Tibial artery (tissue), 4 donors: ENCODE measurements at regions of chr9 and their contacts with region 1.

Region 1: DNA sequence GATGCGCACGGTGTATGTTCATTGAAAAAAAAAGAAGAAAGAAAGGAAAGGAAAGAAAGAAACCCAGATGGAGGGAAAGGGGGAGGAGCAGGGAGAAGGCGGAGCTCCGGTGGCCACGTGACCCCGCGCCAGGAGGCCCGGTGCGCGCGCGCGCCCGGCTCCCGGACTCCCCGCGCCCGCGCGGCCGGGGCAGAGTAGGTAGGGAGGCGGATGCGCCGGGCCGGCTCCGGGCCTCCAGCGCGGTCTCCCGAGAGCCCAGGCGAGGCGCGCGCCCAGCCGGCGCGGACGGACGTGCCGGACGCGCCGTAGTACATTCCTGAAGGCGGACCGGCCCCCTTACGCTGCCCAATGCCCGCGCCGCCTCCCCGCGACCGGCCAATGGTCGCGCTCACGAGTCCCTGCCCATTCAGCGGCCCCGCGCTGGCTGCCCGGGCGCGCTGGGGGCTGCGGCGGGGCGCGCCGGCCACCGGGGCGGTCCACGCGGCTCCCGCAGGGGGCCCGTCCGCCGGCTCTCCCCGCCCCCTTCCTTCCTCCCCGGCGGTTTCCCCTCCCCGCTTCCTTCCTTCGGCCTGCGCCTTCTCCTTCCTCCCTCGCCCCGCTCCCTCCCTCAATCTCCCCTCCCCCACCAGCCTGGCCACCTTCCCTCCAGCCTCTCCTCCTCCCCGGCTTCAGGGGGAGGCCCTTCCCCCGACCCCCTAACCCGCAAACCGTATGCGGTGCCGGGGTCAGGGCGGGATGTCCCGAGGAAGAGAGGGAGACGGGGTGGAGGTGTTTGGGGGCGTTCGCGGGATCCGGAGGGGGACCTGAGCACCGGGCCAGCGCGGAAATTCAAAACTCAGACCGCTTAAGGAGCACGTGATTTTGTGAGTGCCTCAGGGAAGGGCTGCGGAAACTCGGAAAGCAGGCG is 5.8 kb downstream of the PTCH1 start:
- DNase-seq: peak; percentile 89 to 96
- H3K4me3 ChIP-seq: peak overlapping the region; percentile 75 to 92
- H3K27ac ChIP-seq: peak overlapping the region; percentile 92 to 97
- H3K4me1 ChIP-seq: peaks cover 0 to 23% (median 11%) of the 10 kb centered on the region in 4 donors
- H3K27me3 ChIP-seq: no peaks in the 10 kb centered on the region
- CTCF ChIP-seq: peak in 1 of 2 experiments; percentile 7

Region 2: DNA sequence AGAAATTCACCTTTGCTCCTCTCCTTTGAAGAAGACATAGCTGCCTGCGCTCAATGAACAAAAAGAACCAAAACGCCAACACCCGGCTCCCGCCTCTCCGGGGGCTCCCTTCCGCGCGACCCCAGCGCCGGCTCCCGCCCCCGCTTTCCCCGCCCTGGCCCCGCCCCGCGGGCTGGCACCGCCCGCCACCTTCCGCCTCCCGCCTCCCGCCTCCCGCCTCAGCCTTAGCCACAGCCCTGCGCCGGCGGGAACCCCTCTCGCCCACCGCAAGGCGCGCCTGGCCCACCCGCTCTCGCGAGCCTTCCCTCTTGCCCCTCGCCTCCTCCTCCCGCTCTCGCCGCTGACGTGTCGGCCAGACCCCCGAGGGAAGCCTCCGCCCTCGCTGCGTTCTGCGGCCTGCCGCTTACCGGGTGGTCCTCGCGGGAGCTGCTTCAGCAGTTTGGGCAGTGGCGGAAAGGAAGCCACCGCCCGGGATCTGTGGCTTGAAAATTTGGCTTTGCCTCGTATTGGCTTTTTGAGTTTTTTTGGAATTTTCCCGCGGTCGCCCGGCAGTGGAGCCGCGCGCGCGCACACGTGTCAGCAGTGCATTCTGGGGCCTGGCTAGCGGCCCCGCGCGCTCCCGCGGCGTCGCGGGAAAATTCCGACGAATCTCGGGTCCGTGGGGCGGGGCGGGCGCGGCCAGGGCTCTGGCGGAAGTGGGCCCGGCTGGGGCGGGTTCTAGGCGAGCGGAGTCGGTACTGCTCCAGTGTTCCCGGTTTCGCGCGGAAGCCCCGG is 193.7 kb before region 1 on chr9 and contains the start of gene FANCC:
- intact Hi-C with region 1: loop called (anchors 10 kb)
- DNase-seq: peak; percentile 90 to 94
- H3K4me3 ChIP-seq: peak within 1 kb of the TSS; percentile 78 to 79
- H3K27ac ChIP-seq: peak within 1 kb of the TSS; percentile 77 to 81
- H3K4me1 ChIP-seq: peaks cover 0 to 12% (median 4%) of the 10 kb centered on the region in 4 donors
- H3K27me3 ChIP-seq: no peaks in the 10 kb centered on the region
- CTCF ChIP-seq: no peak

Region 3: GRCh38 chr9:95875305-95876137 is 364.6 kb after region 1 on chr9 and contains the start of gene ERCC6L2:
- intact Hi-C with region 1: loop called (anchors 5 kb)
- DNase-seq: peak; percentile 95 to 97
- H3K4me3 ChIP-seq: no peak within 1 kb of the TSS
- H3K27ac ChIP-seq: no peak within 1 kb of the TSS
- H3K4me1 ChIP-seq: peaks cover 0 to 22% (median 10%) of the 10 kb centered on the region in 4 donors
- H3K27me3 ChIP-seq: no peaks in the 10 kb centered on the region
- CTCF ChIP-seq: no peak